ENCODE measurements at regions of chr7 and their contacts with region 1.

Region 1: DNA sequence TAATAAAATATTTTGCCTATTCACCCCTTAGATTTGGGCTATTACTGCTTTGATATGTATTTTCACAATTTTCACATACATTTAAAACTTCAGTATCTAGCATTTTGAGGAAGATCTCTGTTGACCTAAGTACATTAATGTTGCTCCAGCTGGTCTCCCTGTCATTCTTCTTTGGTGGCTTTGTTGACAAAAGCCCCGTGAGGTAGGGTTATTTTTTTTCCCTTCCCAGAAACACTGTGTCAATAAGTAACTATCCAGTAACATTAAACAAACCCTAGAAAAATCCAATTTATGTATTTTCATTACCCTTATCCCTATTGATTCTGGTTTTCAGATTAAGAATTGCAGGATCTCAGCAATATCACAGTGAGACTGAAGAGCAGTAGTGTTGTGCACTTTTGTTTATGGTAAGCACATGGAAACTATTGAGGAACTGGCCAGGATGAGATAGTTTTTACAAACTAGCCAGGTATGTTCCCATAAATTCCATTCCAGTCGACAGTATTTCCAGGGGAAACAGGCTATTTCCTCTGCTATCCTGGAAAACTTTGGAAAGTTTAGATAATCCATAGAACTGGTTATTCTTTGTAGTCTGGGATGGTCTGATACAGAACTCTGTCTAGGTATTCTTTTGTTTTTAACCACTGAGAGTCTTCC is 198.2 kb downstream of the PON1 start:
- DNase-seq: no peak
- ATAC-seq: no peak
- H3K4me3 ChIP-seq: no peak overlapping the region
- H3K27ac ChIP-seq: no peak overlapping the region
- H3K4me1 ChIP-seq: no peaks in the 10 kb centered on the region
- H3K27me3 ChIP-seq: no peaks in the 10 kb centered on the region
- CTCF ChIP-seq: no peak
- POLR2A ChIP-seq: no peak
- RAD21 ChIP-seq: no peak

Region 2: GRCh38 chr7:95144256-95144655 is 18.1 kb after region 1 on chr7:
- CTCF ChIA-PET with region 1: no interaction called
- POLR2A ChIA-PET with region 1: interaction called, 10 read pairs
- dilution Hi-C with region 1: no loop called
- in situ Hi-C with region 1: no loop called
- intact Hi-C with region 1: no loop called
- DNase-seq: no peak
- ATAC-seq: no peak
- H3K4me3 ChIP-seq: no peak overlapping the region
- H3K27ac ChIP-seq: no peak overlapping the region
- H3K4me1 ChIP-seq: no peaks in the 10 kb centered on the region
- H3K27me3 ChIP-seq: no peaks in the 10 kb centered on the region
- CTCF ChIP-seq: no peak
- POLR2A ChIP-seq: no peak
- RAD21 ChIP-seq: no peak

Measured in IMR-90 (cell line).